Heart right ventricle (tissue), 16 donors: ENCODE measurements at regions of chr19 and their contacts with region 1.

Region 1: GRCh38 chr19:9381367-9381785 is 18.6 kb downstream of the ZNF177 start:
- DNase-seq: no peak
- ATAC-seq: no peak
- H3K4me3 ChIP-seq: no peak overlapping the region
- H3K27ac ChIP-seq: no peak overlapping the region
- H3K4me1 ChIP-seq: no peaks in the 10 kb centered on the region
- H3K27me3 ChIP-seq: no peaks in the 10 kb centered on the region
- CTCF ChIP-seq: no peak

Region 2: DNA sequence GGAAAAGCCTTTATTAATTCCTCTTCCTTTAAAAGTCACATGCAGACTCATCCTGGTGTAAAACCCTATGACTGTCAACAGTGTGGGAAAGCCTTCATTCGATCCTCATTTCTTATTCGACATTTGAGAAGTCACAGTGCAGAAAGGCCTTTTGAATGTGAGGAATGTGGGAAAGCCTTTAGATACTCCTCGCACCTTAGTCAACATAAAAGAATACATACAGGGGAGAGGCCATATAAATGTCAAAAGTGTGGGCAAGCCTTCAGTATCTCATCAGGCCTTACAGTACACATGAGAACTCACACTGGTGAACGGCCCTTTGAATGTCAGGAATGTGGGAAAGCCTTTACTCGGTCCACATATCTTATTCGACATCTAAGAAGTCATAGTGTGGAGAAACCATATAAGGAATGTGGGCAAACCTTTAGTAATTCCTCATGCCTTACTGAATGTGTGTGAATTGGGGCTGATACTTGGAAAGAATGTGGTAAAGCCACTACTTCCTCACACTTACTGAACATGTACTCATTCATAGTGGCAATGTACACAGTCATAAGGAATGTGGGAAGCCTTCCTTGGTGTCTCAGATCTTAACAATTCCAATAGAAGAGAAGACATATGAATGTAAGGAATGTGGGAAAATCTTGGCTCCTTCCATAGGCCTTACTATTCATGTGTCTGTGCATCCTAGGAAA is 38.6 kb before region 1 on chr19:
- intact Hi-C with region 1: loop called in 2 of 10 experiments (anchors 5 kb)
- DNase-seq: no peak
- ATAC-seq: no peak
- H3K4me3 ChIP-seq: no peak overlapping the region
- H3K27ac ChIP-seq: no peak overlapping the region
- H3K4me1 ChIP-seq: no peaks in the 10 kb centered on the region
- H3K27me3 ChIP-seq: no peaks in the 10 kb centered on the region
- CTCF ChIP-seq: no peak